ENCODE measurements at regions of chr12 and their contacts with region 1.

Region 1: DNA sequence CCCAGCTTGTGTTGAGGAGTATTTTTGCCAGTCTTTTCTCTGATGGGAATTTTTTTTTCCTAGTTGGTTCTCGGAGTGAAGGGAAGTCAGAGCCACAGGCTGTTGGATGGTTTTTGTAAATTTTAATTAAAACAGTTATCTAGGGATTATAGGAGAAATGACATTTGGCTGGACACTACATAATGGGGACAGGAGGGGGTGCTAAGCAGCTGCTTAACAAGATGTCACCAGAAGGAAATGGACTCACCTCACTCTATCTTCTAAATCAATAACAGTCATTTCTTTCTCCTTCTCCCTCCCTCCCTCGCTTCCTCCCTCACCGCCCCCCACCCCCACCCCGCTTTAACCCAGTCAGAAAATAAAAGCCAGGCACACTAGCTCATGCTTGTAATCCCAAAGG is 93.4 kb upstream of the TMEM233 start:
- DNase-seq: no peak
- H3K4me3 ChIP-seq: no peak overlapping the region
- CTCF ChIP-seq: no peak

Region 2: GRCh38 chr12:119444456-119445044 is 55.7 kb before region 1 on chr12:
- in situ Hi-C with region 1: loop called (anchors 5 kb)
- DNase-seq: no peak
- H3K4me3 ChIP-seq: no peak overlapping the region
- CTCF ChIP-seq: peak; percentile 42